Sigmoid colon (tissue), 7 donors: ENCODE measurements at regions of chrX and their contacts with region 1.

Region 1: DNA sequence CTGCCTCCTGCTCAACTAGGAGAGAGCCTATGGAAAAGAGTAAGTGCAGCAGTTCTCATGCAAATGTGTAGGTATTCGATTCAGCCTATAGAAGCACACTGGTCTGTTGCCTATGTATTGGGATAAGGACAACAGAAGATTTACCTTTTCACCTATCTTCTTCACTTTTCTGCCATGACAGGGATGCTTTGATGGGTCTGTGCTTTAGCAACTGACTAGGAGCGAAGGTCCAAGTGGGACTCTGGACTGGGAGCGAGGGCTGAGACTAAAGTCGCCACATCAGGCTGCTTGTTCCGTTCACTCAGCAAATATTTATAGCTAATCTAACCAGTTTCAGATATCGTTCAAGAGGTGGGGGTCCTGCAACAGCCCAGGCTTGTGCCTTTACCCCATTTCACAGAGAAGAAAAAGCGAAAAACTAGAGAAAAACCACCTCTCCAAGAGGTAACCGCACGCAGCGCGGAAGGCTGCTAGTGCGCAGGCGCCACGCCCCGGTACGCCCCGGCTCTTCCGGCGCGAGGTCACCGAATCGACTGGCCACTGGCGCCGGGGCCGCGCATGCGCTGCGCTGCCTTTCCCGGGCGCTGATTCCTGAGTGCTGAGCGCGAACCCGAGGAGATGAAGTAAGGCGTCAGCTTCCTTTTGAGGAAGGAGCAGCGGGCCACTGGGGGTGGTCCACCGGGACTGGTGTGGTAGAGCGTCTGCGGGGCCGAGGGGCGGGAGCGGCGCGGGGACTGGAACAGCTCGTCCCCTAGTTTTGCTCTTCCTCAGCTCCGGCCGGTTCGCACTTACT is at the start of gene RBMX2:
- DNase-seq: peak; percentile 85
- H3K4me3 ChIP-seq: peak within 1 kb of the TSS; percentile 40 to 67 (median 62)
- H3K27ac ChIP-seq: peak within 1 kb of the TSS; percentile 69 to 84 (median 80)
- H3K4me1 ChIP-seq: peaks cover 0 to 15% (median 5%) of the 10 kb centered on the region in 4 donors
- H3K27me3 ChIP-seq: peaks cover 0 to 3% (median 0%) of the 10 kb centered on the region in 3 donors
- CTCF ChIP-seq: no peak
- EP300 ChIP-seq: no peak
- POLR2A ChIP-seq: peak; percentile 48 to 60
- total RNA-seq, gene RBMX2: 18.9 to 25.2 (median 20.8) TPM

Region 2: DNA sequence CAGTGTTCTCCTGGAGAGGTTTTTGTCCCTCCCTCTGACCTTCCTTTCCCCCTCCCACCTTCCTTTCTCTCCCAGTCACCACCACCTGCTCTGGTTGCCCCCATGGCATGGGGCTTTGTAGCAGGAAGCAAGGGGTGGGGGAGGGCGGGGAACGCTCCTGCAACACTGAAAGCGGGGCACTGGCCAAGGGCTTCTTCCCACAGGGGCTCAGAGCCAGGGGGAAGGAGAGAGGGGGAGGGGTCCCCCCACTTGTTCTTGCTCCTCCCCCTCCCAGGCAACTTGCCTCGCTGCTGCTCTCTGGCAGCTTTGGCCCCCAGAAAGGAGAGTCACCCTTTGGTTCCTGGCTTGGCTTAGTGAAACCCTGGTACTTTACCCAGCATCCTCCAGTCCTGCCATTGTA is 370.8 kb before region 1 on chrX:
- intact Hi-C with region 1: no loop called
- DNase-seq: no peak
- H3K4me3 ChIP-seq: no peak overlapping the region
- H3K27ac ChIP-seq: no peak overlapping the region
- H3K4me1 ChIP-seq: no peaks in the 10 kb centered on the region
- H3K27me3 ChIP-seq: no peaks in the 10 kb centered on the region
- CTCF ChIP-seq: no peak
- EP300 ChIP-seq: no peak
- POLR2A ChIP-seq: no peak

Region 3: DNA sequence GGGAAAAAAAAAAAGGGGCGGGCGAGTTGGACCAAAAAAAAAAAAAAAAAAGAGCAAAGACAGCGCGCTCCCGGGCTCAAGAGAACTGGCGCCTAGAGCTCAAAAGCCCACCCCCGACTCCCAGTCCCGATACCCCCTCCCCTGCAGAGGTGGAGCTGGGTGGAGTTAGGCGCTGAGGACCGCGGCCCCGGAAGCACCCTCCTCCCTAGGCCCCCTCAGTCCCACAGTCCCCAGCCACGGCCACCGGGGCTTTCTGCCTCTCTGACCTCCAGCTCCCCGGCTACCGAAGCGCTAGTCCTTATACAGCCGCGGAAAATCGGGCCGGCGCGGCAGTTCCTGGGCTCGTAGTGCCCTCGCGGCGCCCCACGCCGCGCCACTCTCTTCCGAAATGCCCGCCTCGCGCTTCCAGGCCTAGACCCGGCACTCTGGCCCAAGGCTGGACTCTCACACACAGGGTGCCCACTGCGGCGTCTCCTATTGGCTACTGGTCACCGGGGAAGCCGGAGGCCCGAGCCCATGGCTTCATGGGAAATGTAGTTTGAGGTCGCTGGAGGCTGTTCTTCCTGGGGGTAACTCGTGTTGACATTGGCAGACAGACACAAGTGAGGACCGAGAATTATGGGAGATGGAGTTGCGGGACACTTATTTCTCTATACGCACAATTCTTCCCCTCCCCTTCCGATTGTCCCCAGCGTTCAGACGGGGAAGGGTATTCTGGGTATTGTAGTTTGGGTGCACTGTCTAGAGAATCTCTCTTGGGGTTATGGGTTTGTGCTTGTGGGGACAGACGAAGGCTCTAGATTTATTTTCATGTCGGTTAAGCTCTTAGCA is 501.4 kb after region 1 on chrX and contains the start of gene ENOX2:
- intact Hi-C with region 1: loop called (anchors 5 kb)
- DNase-seq: peak; percentile 97
- H3K4me3 ChIP-seq: peak within 1 kb of the TSS; percentile 60 to 72 (median 66)
- H3K27ac ChIP-seq: peak within 1 kb of the TSS; percentile 81 to 90 (median 83)
- H3K4me1 ChIP-seq: peaks cover 0 to 6% (median 0%) of the 10 kb centered on the region in 4 donors
- H3K27me3 ChIP-seq: no peaks in the 10 kb centered on the region
- CTCF ChIP-seq: no peak
- EP300 ChIP-seq: peak in 1 of 4 donors; percentile 21
- POLR2A ChIP-seq: peak; percentile 65 to 71
- total RNA-seq, gene ENOX2: 18.8 to 28.9 (median 22.0) TPM